PC-9 (cell line): ENCODE measurements at regions of chr19 and their contacts with region 1.

Region 1: DNA sequence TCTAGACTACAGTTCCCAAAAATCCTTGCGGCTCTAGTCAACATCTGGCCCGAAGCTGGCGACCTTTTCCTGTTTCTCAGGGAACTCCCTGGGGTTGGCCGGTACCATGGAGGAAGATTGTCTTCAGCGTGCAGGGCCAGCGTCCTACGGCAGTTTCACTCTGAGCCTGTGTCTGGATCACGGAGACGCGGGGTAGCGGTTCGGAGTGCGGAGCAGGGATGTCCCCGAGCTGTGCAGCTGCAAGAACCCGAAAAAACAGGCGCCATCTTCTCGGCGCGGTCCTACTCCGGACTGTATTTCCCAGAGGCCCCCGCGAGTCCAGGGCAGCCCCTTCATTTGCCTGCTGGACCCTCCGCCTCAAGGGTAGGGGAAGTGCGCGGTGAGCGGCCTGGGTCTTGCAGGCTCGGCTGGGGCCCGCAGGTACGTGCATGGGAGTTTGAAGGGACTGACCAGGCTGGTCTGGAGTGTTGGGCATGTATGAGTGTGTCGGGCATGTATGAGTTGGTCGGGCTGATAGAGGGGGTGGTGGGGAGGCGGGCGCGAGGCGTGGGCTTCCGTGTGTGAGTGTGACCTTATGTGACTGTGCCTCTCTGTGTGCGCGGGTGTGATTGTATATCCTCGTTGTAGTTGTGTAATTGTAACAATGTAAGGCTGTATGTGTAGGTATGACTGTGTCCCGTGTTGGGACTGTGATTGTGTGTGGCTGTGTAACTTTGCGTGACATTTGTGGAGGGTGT is at the start of gene ZNF383:
- DNase-seq: peak; percentile 70 to 82
- H3K4me3 ChIP-seq: peak within 1 kb of the TSS; percentile 88
- H3K27ac ChIP-seq: no peak within 1 kb of the TSS
- H3K4me1 ChIP-seq: no peaks in the 10 kb centered on the region; the same call in 1 of the 2 replicates
- H3K27me3 ChIP-seq: no peaks in the 10 kb centered on the region
- CTCF ChIP-seq: no peak
- total RNA-seq, gene ZNF383: 6.2 and 6.5 TPM in 2 replicates

Region 2: DNA sequence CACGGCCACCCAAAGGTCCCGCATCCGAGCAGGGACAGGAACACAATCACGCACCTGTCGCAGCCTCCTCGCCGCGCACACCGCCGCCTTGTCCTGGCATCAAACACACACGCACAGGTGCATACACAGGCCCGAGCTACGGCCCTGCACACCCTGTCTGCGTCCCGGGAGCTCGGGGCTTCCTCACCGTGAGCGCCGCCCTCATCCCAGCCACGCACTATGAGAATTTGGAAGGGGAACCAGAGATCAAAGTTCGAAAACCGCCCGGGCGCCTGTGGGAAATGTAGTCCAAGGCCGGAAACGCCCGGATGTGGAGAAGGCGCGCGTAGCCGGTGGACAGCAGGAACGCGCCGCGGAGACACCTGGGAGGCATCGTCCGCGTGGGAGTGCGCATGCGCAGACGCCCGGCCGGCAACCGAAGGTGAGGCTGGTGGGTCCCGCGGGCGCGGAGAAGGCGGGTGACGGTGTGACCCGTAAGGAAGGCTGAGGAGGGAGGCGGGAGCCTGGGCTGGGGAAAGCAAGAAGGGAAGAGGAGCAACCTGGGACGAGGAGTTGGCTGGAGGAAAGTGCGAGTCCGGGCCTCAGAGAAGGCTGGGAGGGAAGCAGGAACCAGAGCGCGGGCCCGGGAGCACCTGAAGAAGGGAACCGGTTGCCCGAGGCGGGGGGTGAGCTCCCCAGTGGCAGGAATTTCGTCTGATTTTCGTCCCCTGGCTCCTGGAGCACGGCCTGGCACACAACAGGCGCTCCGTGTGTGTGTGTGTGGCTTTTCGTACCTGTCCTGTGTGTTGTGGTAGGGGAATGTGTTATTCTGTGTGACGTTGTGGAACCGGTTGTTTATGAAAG is 530.6 kb before region 1 on chr19 and contains the start of gene ZNF567:
- CTCF ChIA-PET with region 1: no interaction called
- POLR2A ChIA-PET with region 1: no interaction called
- intact Hi-C with region 1: loop called (anchors 5 kb)
- DNase-seq: peak; percentile 89 to 98
- H3K4me3 ChIP-seq: peak within 1 kb of the TSS; percentile 82
- H3K27ac ChIP-seq: peak within 1 kb of the TSS; percentile 38
- H3K4me1 ChIP-seq: no peaks in the 10 kb centered on the region; the same call in 1 of the 2 replicates
- H3K27me3 ChIP-seq: no peaks in the 10 kb centered on the region
- CTCF ChIP-seq: no peak
- total RNA-seq, gene ZNF567: 7.0 and 7.9 TPM in 2 replicates

Region 3: GRCh38 chr19:36837906-36838783 is 379.9 kb before region 1 on chr19 and contains the start of gene ZNF790:
- CTCF ChIA-PET with region 1: interaction called, 12 read pairs
- POLR2A ChIA-PET with region 1: no interaction called
- intact Hi-C with region 1: no loop called
- DNase-seq: peak; percentile 80 to 82
- H3K4me3 ChIP-seq: peak within 1 kb of the TSS; percentile 74
- H3K27ac ChIP-seq: no peak within 1 kb of the TSS
- H3K4me1 ChIP-seq: no peaks in the 10 kb centered on the region
- H3K27me3 ChIP-seq: no peaks in the 10 kb centered on the region
- CTCF ChIP-seq: no peak
- total RNA-seq, gene ZNF790: 5.0 and 5.9 TPM in 2 replicates

Region 4: DNA sequence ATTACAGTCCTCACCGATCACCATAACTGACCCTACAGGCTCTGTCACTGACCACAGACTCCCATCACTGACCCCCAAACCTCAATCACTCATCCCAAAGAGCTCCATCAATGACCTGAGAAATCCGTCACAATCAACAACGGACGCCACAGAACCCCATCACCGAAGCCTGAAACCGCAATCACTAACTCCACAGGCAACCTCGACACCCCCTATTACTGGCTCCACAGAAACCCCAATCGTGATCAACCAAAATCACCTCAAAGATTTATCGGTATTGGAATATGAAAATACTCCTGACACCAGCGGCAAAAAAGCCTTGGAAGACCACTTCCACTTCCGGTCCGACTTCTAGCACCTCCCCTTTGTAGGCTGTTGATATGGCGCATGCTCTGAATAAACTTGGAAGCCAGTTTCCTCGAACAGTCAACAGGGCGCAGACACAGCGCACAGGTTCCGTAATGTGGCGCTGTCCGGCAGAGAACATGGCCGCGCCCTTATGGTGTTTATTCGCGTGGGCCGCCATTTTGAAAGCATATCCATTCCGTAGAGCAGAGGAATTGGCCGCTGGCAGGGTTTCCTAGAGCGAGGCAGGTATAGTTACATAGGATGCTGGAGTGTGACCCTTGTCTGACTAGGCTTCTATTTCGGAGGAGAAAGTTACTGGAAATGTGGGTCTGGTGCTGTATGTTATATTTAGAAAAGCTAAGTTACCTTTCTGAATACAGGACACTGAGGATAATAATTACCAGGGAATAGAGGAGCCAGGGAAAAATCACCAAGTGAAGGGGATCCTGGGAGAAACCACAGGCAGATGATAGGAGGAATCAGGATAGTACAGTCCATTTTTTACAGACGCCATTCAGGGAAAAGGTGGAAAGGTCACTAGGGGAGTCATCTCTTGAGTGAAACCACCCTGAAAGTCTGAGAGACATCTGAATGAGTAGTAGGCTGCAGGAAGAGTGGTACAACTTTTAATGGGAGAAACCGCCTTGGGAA is 45.4 kb before region 1 on chr19 and contains the start of gene ZNF585A:
- CTCF ChIA-PET with region 1: no interaction called
- POLR2A ChIA-PET with region 1: no interaction called
- intact Hi-C with region 1: loop called (anchors 1 kb)
- DNase-seq: peak; percentile 90 to 93
- H3K4me3 ChIP-seq: peak within 1 kb of the TSS; percentile 89
- H3K27ac ChIP-seq: 0 out of 2 replicates have a peak within 1 kb of the TSS, but pooled peaks have one; percentile 3
- H3K4me1 ChIP-seq: no peaks in the 10 kb centered on the region; the same call in 1 of the 2 replicates
- H3K27me3 ChIP-seq: no peaks in the 10 kb centered on the region
- CTCF ChIP-seq: no peak
- total RNA-seq, gene ZNF585A: 9.9 and 13.8 TPM in 2 replicates

Region 5: GRCh38 chr19:37243206-37243632 is 25.2 kb after region 1 on chr19:
- CTCF ChIA-PET with region 1: no interaction called
- POLR2A ChIA-PET with region 1: no interaction called
- intact Hi-C with region 1: no loop called
- DNase-seq: no peak
- H3K4me3 ChIP-seq: no peak overlapping the region
- H3K27ac ChIP-seq: no peak overlapping the region
- H3K4me1 ChIP-seq: no peaks in the 10 kb centered on the region
- H3K27me3 ChIP-seq: no peaks in the 10 kb centered on the region
- CTCF ChIP-seq: no peak

Region 6: DNA sequence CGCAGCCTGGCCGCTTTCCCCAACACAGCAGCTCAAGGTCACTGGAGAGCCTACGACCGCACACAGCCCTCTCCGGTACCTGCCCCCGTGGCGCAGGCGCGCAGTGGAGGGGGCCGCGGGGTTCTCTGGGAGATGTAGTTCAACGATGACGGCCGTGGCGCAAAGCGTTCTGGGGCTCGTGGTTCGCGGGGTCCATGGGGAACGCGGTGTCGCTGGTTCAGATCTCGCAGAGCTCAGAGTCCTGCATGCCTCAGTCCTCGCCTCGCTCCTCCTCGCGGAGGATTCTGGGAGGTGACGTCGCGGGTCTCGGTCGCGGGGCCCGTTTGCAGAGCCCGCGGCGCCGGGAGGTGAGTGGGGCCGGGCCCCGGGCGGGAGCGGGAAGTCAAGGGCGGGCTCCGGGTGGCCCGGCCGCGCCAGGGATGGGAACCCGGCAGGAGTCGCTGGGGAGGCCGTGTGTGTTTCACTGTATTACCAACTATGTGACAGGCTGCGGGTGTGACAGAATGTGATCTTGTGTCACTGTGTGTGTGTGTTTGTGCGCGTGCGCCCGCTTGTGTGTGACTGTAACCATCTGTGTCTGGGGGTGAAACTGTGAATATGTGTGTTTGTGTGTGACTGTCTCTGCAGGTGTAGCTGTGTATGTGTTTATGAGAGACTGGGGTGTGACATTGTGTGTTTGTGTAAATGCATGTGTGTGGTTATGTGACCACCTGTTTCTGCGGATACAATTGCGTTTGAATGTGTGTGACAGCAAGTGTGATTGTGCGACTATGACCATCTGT is 153.0 kb after region 1 on chr19 and contains the start of gene ZNF527:
- CTCF ChIA-PET with region 1: no interaction called
- POLR2A ChIA-PET with region 1: interaction called, 11 read pairs
- intact Hi-C with region 1: no loop called
- DNase-seq: peak; percentile 90 to 95
- H3K4me3 ChIP-seq: peak within 1 kb of the TSS; percentile 85
- H3K27ac ChIP-seq: no peak within 1 kb of the TSS
- H3K4me1 ChIP-seq: 0 out of 2 replicates have a peak, but pooled peaks cover 4% of the 10 kb centered on the region
- H3K27me3 ChIP-seq: no peaks in the 10 kb centered on the region
- CTCF ChIP-seq: no peak
- total RNA-seq, gene ZNF527: 2.9 and 3.2 TPM in 2 replicates

Region 7: DNA sequence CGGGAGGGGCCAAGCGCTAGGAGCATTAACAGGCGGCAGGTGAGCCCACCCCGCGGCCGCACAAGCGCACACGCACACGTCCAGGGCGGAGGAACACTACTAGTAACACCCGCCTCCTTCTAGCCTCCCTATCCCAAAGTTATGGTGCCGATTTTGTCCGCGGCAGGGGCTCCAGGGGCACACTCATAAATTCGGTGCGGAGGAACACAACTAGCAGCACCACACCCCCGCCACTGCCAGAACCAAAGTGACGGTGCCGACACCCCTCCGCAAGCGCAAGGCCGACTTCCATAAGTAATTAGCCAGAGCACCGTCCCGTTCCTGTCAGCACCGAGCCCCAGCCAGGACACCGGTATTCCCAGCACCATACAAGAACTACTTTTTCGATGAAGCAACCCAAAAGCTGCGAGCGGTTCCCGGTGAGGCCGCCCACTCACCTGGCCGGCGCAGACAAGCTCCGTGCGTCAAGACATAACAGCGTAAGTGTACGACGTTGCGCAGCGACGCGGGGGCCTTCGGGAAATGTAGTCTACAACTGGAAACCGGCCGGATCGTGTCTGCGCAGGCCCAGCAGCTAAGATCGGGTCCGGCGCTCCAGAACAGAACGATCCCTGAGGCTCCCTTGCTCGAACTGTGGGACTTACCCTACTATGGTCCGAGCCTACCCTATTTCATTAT is 376.4 kb after region 1 on chr19 and contains the starts of genes ZNF540 and ZNF571:
- CTCF ChIA-PET with region 1: no interaction called
- POLR2A ChIA-PET with region 1: no interaction called
- intact Hi-C with region 1: loop called (anchors 10 kb)
- DNase-seq: peak; percentile 87 to 90
- H3K4me3 ChIP-seq: peak within 1 kb of the TSS; percentile 75
- H3K27ac ChIP-seq: peak within 1 kb of the TSS; percentile 68
- H3K4me1 ChIP-seq: peaks cover 18% of the 10 kb centered on the region; the same call in 1 of the 2 replicates
- H3K27me3 ChIP-seq: no peaks in the 10 kb centered on the region
- CTCF ChIP-seq: no peak
- total RNA-seq, gene ZNF540: 0.25 and 0.37 TPM in 2 replicates
- total RNA-seq, gene ZNF571: 2.1 and 2.2 TPM in 2 replicates